ENCODE measurements at regions of chr3 and their contacts with region 1.

Region 1: DNA sequence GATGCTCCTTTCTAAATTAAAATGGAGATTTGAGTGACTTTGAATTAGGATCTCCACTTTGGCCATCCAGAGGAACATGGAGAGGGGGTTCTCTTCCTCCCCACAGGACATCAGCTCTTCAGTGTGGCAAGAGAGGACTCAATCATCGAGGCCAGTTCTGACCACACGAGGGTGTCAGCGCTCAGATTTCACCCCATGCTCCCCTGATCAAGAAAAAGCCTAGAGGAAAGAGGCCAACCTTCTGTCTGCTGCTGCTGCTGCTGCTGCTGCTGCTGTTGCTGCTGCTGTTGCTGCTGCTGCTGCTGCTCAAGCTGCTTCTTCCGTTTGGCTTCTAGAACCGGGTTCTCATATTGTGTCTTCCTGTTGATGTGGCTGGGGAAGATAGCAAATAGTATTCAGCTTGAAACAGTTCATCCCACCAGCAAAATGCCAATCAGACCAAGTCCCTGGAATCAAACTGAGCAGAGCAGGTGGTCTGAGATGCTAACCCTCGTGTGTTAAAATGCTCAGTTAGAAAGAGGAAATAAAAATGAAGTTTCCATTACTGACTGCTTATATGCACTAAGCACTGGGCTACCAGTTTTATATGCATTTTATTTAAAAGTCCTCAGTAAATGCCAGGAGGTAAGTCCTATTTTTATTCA is 599.0 kb downstream of the MAGI1 start:
- DNase-seq: no peak
- H3K4me3 ChIP-seq: no peak overlapping the region
- CTCF ChIP-seq: peak; percentile 79

Region 2: GRCh38 chr3:65425880-65426279 is 13.9 kb before region 1 on chr3:
- CTCF ChIA-PET with region 1: interaction called, 48 read pairs
- POLR2A ChIA-PET with region 1: no interaction called
- DNase-seq: no peak
- H3K4me3 ChIP-seq: no peak overlapping the region
- CTCF ChIP-seq: peak; percentile 49

Region 3: GRCh38 chr3:65672871-65673815 is 233.4 kb after region 1 on chr3:
- CTCF ChIA-PET with region 1: interaction called, 25 read pairs
- POLR2A ChIA-PET with region 1: no interaction called
- DNase-seq: no peak
- H3K4me3 ChIP-seq: no peak overlapping the region
- CTCF ChIP-seq: peak; percentile 68

Region 4: GRCh38 chr3:65732051-65732935 is 292.5 kb after region 1 on chr3:
- CTCF ChIA-PET with region 1: interaction called, 52 read pairs
- POLR2A ChIA-PET with region 1: no interaction called
- DNase-seq: no peak
- H3K4me3 ChIP-seq: no peak overlapping the region
- CTCF ChIP-seq: peak; percentile 72

Region 5: DNA sequence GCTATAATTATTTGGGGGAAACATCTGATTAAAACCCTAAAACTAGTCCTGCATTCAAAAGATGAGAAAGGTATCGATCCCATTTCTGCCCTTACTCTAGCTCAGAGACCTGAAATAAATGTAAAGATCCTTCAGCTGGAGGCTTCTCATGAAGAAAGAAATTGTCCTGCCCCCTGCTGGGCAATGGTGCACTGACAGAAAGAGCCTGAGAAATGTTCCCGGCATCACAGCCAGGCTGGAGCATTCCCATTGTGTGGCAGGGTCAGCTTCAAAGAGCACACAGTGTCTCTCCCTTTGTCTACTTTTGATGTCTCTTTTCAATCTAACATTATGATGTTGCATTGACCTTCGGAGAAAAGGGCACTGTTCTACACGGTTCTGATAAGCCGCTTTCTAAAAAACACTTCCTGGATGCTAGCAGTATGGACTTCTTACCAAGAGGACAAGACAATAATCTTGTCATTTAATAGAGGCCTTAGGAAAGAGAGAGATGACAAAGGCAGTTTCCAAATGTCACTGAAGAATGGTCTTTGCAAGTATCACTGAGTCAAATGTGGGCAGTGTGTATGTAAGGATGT is 311.4 kb after region 1 on chr3:
- CTCF ChIA-PET with region 1: interaction called, 51 read pairs
- POLR2A ChIA-PET with region 1: no interaction called
- DNase-seq: no peak
- H3K4me3 ChIP-seq: no peak overlapping the region
- CTCF ChIP-seq: peak; percentile 70

Region 6: DNA sequence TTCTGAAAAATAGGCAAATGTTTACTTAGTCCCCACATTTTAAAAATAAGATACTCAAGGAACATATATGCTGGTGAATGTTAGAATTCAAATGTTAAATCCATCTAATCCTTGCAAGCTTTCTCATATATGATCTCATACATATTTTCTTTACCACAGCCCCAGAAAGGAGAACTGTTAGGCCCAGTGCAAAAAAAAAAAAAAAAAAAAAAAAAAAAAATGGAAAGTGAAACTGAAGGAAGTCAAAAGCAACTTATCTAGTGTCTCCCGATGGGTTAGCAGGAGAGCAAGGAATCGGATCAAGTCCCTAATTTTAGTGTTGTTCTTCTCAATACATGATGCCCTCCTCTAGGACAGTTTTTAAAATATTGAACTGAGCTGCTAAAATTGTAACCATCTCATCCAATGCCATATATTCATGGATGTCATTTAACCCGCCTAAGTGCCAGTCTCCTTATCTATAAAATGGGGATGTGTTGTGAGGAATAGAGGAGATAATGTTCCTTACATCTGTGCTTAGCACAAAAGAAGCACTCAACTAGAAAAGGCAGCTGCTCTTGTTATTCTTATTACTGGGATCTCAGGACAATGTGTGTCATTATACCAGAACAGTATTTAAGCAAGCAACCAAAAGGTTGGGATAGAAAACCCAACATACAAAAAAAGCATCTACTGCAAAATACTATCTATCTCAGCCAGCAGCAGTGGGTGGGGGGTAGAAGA is 319.3 kb after region 1 on chr3:
- CTCF ChIA-PET with region 1: interaction called, 18 read pairs
- POLR2A ChIA-PET with region 1: no interaction called
- DNase-seq: no peak
- H3K4me3 ChIP-seq: peak overlapping the region; percentile 35
- CTCF ChIP-seq: no peak

Region 7: GRCh38 chr3:66165660-66166059 is 725.9 kb after region 1 on chr3:
- CTCF ChIA-PET with region 1: no interaction called
- POLR2A ChIA-PET with region 1: no interaction called
- DNase-seq: no peak
- H3K4me3 ChIP-seq: no peak overlapping the region
- CTCF ChIP-seq: no peak

Measured in AG04449 (cell line).